Gastrocnemius medialis (tissue), 4 donors: ENCODE measurements at regions of chr7 and their contacts with region 1.

Region 1: DNA sequence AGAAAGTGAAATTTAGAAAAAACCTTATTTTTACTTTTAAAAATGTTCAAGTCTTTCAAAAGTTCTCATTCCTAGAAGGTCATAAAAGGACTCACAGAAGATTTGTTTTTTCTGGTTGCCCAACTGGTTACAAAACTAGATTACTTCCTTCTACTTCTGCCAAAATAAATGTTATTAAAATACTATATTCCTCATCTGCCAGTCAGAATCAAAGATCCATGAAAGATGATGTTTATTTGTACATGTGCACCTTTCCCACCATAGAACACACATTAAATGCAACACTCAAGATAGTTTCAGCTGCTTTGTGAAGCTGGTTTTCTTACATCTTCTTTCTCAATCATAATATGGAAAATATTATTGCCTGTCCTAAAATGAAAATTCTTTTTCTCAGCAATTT is 465.4 kb downstream of the ETV1 start:
- DNase-seq: no peak
- ATAC-seq: no peak
- H3K4me3 ChIP-seq: no peak overlapping the region
- H3K27ac ChIP-seq: no peak overlapping the region
- H3K4me1 ChIP-seq: no peaks in the 10 kb centered on the region
- H3K27me3 ChIP-seq: no peaks in the 10 kb centered on the region
- CTCF ChIP-seq: no peak
- POLR2A ChIP-seq: no peak

Region 2: DNA sequence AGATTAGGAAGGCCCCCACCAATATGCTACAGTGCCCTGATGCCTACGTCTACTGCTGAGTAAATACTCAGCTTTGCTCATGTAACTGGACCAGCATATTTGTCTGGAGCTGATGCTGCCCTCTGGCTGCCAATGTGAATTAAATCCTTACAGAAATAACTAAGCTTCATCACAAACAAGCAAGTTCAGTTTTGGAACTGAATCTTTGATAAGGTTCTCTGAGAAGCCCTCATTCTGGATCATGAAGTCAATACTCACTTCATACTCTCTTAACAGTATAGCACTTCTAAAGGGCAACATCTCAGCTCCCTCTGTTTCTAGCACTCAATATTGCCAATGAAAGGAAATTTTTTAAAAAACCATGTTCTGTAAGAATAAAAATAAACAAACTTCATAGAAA is 218.7 kb after region 1 on chr7:
- in situ Hi-C with region 1: no loop called
- intact Hi-C with region 1: loop called (anchors 2 kb)
- DNase-seq: no peak
- ATAC-seq: no peak
- H3K4me3 ChIP-seq: no peak overlapping the region
- H3K27ac ChIP-seq: no peak overlapping the region
- H3K4me1 ChIP-seq: peaks cover 7 to 10% of the 10 kb centered on the region in 2 donors
- H3K27me3 ChIP-seq: no peaks in the 10 kb centered on the region
- CTCF ChIP-seq: peak; percentile 13 to 45 (median 30)
- POLR2A ChIP-seq: no peak